ENCODE measurements at regions of chr6 and their contacts with region 1.

Region 1: GRCh38 chr6:109221543-109222195 is 126.4 kb downstream of the CEP57L1 start:
- DNase-seq: no peak
- ATAC-seq: no peak
- H3K4me3 ChIP-seq: no peak overlapping the region
- H3K4me3 Mint-ChIP-seq: no peak overlapping the region
- H3K27ac ChIP-seq: no peak overlapping the region
- H3K27ac Mint-ChIP-seq: no peak overlapping the region
- H3K4me1 ChIP-seq: peaks cover 0 to 3% of the 10 kb centered on the region in 2 donors
- H3K4me1 Mint-ChIP-seq: peaks cover 12 to 36% (median 23%) of the 10 kb centered on the region in 7 donors
- H3K27me3 ChIP-seq: no peaks in the 10 kb centered on the region
- H3K27me3 Mint-ChIP-seq: peaks cover 2 to 15% (median 9%) of the 10 kb centered on the region in 5 donors

Region 2: DNA sequence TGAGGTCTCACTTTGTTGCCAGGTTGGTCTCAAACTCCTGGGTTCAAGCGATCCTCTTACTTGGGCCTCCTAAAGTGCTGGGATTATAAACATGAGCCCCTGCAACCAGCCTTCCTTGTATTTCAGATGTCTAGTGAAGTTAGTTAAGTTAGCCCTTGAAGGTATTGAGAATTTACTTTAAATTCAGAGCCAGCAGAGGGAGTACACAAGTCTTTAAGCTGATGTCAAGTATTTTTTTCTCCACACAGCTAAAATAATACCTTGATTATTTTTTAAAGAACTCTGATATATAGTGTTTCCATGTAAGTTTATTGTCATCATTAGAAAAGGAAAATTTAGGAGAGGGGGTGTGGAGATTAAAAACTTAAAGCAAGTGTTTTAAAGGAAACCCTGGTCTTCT is 651.2 kb before region 1 on chr6:
- CTCF ChIA-PET with region 1: no interaction called
- POLR2A ChIA-PET with region 1: no interaction called
- intact Hi-C with region 1: no loop called
- DNase-seq: no peak
- ATAC-seq: no peak
- H3K4me3 ChIP-seq: no peak overlapping the region
- H3K4me3 Mint-ChIP-seq: no peak overlapping the region
- H3K27ac ChIP-seq: no peak overlapping the region
- H3K27ac Mint-ChIP-seq: no peak overlapping the region
- H3K4me1 ChIP-seq: peaks cover 18 to 22% of the 10 kb centered on the region in 2 donors
- H3K4me1 Mint-ChIP-seq: peaks cover 24 to 71% (median 60%) of the 10 kb centered on the region in 7 donors
- H3K27me3 ChIP-seq: no peaks in the 10 kb centered on the region
- H3K27me3 Mint-ChIP-seq: peaks cover 0 to 18% (median 0%) of the 10 kb centered on the region in 5 donors

Region 3: DNA sequence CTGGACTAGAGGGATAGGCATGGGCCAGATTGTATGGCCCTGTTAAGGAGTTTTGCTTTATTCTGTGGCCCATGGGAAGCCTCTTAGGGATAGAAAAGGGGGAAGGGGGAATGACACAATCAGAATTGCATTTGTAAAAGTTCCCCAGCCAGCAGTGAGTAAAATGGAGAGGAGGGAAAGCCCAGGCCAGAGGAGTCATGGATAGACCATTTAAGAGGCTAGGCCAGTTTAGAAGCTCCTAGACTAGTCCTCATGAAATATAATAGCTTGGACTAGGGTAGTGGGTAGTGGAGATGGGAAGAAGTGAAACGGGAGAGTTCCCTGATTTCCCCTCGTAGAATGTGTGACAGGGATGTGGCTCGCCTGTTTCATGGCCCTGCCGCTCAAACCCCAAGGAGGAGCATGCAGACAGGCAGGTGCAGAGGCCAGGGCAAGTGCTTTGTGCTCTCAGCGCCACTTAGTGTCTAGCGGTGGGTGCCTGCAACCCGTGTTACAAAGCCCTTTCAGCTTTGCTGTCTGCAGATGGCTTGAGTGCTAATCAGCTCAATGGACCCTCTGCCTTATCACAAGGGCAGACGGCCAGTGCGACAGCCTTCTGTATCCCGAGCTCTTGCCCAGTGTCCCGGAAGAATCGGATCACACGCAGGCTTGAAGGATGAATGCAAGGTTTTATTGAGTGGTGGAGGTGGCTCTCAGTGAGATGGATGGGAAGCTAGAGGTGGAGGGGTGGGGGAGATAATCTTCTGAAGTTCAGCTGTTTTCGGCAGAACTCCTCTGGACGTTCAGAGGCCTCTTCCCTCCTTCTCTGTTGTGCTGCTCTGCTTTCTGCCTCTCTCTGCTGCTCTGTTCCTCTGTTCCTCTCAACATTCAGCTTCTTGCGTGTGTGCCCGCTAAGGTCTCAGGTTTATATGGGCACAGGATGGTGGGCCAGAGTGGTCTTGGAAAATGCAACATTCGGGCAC is 14.7 kb after region 1 on chr6:
- CTCF ChIA-PET with region 1: no interaction called
- POLR2A ChIA-PET with region 1: no interaction called
- intact Hi-C with region 1: loop called in 1 of 2 experiments (anchors 2 kb)
- DNase-seq: peak in 3 of 9 donors; percentile 12 to 34 (median 32)
- ATAC-seq: peak; percentile 56
- H3K4me3 ChIP-seq: no peak overlapping the region
- H3K4me3 Mint-ChIP-seq: peak overlapping the region; percentile 0 to 73 (median 26)
- H3K27ac ChIP-seq: no peak overlapping the region
- H3K27ac Mint-ChIP-seq: peak overlapping the region in 8 of 9 donors; percentile 2 to 90 (median 42)
- H3K4me1 ChIP-seq: no peaks in the 10 kb centered on the region
- H3K4me1 Mint-ChIP-seq: peaks cover 6 to 25% (median 18%) of the 10 kb centered on the region in 7 donors
- H3K27me3 ChIP-seq: no peaks in the 10 kb centered on the region
- H3K27me3 Mint-ChIP-seq: peaks cover 0 to 3% (median 0%) of the 10 kb centered on the region in 5 donors